Activated CD8-positive, alpha-beta T cell treated with anti-CD3 and anti-CD28 coated beads, Interleukin-2, amount 10 ng/mL, durations not matched to agents 7 days and 5 days (primary cell): ENCODE measurements at regions of chr12 and their contacts with region 1.

Region 1: GRCh38 chr12:47812797-47813510 is 6.7 kb downstream of the HDAC7 start:
- DNase-seq: peak; percentile 96
- ATAC-seq: peak; percentile 61
- H3K4me3 Mint-ChIP-seq: peak overlapping the region; percentile 90
- H3K27ac Mint-ChIP-seq: peak overlapping the region; percentile 90
- H3K4me1 Mint-ChIP-seq: peaks cover 97% of the 10 kb centered on the region
- H3K27me3 Mint-ChIP-seq: no peaks in the 10 kb centered on the region

Region 2: GRCh38 chr12:47686645-47687240 is 126.2 kb before region 1 on chr12:
- CTCF ChIA-PET with region 1: no interaction called
- POLR2A ChIA-PET with region 1: no interaction called
- DNase-seq: peak; percentile 48
- ATAC-seq: peak; percentile 58
- H3K4me3 Mint-ChIP-seq: no peak overlapping the region
- H3K27ac Mint-ChIP-seq: no peak overlapping the region
- H3K4me1 Mint-ChIP-seq: no peaks in the 10 kb centered on the region
- H3K27me3 Mint-ChIP-seq: no peaks in the 10 kb centered on the region

Region 3: GRCh38 chr12:47700263-47700662 is 112.7 kb before region 1 on chr12:
- CTCF ChIA-PET with region 1: no interaction called
- POLR2A ChIA-PET with region 1: no interaction called
- DNase-seq: no peak
- ATAC-seq: no peak
- H3K4me3 Mint-ChIP-seq: no peak overlapping the region
- H3K27ac Mint-ChIP-seq: no peak overlapping the region
- H3K4me1 Mint-ChIP-seq: peaks cover 21% of the 10 kb centered on the region
- H3K27me3 Mint-ChIP-seq: no peaks in the 10 kb centered on the region

Region 4: GRCh38 chr12:47779301-47779942 is 33.5 kb before region 1 on chr12:
- CTCF ChIA-PET with region 1: interaction called, 24 read pairs
- POLR2A ChIA-PET with region 1: interaction called, 5 read pairs
- DNase-seq: peak; percentile 94
- ATAC-seq: peak; percentile 91
- H3K4me3 Mint-ChIP-seq: no peak overlapping the region
- H3K27ac Mint-ChIP-seq: peak overlapping the region; percentile 47
- H3K4me1 Mint-ChIP-seq: peaks cover 44% of the 10 kb centered on the region
- H3K27me3 Mint-ChIP-seq: no peaks in the 10 kb centered on the region

Region 5: DNA sequence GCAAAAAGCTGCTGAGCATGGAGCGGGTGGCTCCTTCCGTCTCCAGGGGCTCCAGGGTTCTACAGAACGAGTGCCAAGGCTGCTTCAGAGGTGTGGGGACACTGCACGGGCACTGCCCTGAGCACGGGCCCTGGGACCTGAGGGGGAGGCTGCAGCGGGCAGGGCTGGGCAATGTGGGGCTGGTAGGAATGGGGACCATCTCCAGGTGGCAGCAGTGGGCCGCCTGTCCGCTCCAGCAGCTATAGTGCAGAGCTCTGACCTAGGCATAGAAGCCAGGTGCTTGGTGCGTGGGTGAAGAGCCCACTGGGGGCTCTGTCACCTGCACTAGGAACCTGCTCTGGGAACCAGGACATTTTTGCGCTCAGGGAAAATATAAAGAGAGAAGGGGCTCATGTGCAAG is 15.5 kb before region 1 on chr12:
- CTCF ChIA-PET with region 1: interaction called, 137 read pairs
- POLR2A ChIA-PET with region 1: interaction called, 272 read pairs
- DNase-seq: peak; percentile 57
- ATAC-seq: peak; percentile 73
- H3K4me3 Mint-ChIP-seq: no peak overlapping the region
- H3K27ac Mint-ChIP-seq: peak overlapping the region; percentile 83
- H3K4me1 Mint-ChIP-seq: peaks cover 47% of the 10 kb centered on the region
- H3K27me3 Mint-ChIP-seq: no peaks in the 10 kb centered on the region

Region 6: DNA sequence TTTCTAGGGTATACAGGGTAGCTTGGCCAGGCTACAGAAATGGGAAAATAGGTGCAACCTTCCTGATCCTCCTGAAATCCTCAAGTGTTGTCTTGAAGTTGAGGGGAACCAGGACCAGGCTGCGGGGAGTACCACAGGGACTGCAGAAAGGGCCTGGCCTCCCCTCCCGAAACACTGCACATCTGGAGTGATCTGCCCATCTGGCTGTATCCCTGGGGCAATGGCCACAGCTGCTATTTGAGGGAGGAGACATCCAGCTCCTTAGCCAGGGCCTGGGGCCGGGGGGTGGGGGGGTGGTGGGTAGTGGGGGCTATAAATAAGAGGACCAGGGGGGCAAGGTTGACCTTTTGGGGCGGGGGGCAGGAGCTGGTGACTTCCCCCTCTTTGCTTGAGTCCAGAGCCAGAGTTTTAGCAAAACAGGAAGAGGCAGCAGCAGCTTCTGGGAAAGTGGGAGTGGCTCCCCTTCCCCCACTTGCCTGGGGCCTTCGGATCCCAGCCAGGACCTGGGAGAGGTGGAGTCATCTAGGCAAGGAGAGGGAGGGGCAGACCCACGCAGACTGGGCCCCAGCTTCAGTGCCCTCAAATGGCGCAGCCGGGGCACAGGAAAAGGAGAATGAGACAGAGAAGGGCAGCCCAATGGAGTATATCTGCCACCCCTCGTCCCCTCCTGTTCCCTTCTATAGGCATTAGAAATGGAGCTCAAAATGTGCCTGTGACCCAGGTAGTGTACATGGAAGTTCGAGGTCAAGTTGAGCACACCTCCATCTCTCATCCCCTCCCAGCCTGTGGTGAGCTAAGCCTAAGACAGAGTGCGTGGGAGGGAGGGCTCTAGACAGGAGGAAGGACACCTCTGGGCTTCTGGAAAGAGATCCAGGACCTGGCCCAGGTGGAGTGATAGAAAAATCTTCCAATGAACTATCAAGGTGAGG is 15.9 kb after region 1 on chr12:
- CTCF ChIA-PET with region 1: interaction called, 1,049 read pairs
- POLR2A ChIA-PET with region 1: interaction called, 642 read pairs
- DNase-seq: no peak
- ATAC-seq: no peak
- H3K4me3 Mint-ChIP-seq: no peak overlapping the region
- H3K27ac Mint-ChIP-seq: peak overlapping the region; percentile 71
- H3K4me1 Mint-ChIP-seq: peaks cover 90% of the 10 kb centered on the region
- H3K27me3 Mint-ChIP-seq: no peaks in the 10 kb centered on the region